Gastrocnemius medialis (tissue), 4 donors: ENCODE measurements at regions of chr5 and their contacts with region 1.

Region 1: DNA sequence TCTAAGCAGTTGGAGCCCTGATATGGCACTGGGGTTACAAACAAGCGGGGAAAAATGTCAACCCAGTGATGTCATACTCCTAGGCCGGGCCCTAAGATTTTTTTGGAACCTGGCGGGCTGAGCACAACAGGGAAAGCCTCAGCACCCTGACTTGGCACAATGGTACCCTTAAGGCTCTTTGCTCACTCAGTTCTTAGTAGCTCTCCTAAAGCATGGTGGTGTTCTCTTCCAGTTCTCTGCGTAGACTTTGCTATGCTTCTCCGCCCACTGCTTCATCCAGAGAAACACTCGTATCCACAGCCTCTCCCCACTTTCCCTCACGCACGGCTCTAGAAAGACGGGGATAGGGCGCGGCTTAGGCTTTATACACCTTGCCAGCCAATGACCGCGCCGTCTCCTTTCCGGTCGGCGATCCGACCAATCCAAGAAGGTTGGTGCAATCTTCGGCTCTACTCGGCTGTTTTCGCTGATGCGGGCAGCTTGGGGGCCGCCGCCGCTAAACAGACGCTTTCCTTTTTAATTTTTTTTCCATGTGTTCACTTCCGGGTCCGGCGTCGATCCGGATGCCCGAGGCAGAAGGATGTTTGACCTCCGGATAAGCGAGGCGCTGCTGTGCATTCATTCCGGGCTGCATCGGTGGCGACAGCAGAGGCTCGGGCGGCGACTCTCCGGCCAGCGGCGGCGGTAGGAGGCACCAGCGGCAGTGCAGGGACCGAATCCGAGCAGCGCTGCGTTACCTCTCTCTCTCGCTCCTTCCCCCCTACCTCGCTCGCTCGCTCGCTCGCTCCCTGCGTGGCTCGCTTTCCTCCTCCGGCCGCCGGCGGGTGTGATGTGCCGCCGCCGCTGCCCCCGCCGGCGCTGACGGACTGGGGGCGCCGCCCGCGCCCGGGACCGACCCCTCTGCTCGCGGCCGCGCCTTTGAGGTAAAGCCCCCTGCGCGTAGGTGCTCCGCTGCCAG is at the start of gene CSNK1G3:
- DNase-seq: peak; percentile 96 to 97
- ATAC-seq: peak; percentile 97
- H3K4me3 ChIP-seq: peak within 1 kb of the TSS; percentile 82 to 85 (median 84)
- H3K27ac ChIP-seq: peak within 1 kb of the TSS; percentile 83 to 89 (median 84)
- H3K4me1 ChIP-seq: peaks cover 20 to 28% of the 10 kb centered on the region in 2 donors
- H3K27me3 ChIP-seq: no peaks in the 10 kb centered on the region
- CTCF ChIP-seq: peak in 1 of 5 experiments; percentile 18
- POLR2A ChIP-seq: peak; percentile 78 to 92
- total RNA-seq, gene CSNK1G3: 14.6 to 23.2 (median 21.5) TPM

Region 2: GRCh38 chr5:121962347-121962670 is 1549.6 kb before region 1 on chr5:
- in situ Hi-C with region 1: no loop called
- intact Hi-C with region 1: loop called (anchors 5 kb)
- DNase-seq: no peak
- ATAC-seq: peak; percentile 6 to 9
- H3K4me3 ChIP-seq: peak overlapping the region; percentile 74 to 92 (median 87)
- H3K27ac ChIP-seq: peak overlapping the region; percentile 83 to 86 (median 85)
- H3K4me1 ChIP-seq: peaks cover 12 to 16% of the 10 kb centered on the region in 2 donors
- H3K27me3 ChIP-seq: peaks cover 0 to 10% (median 4%) of the 10 kb centered on the region in 3 donors
- CTCF ChIP-seq: no peak
- POLR2A ChIP-seq: no peak

Region 3: DNA sequence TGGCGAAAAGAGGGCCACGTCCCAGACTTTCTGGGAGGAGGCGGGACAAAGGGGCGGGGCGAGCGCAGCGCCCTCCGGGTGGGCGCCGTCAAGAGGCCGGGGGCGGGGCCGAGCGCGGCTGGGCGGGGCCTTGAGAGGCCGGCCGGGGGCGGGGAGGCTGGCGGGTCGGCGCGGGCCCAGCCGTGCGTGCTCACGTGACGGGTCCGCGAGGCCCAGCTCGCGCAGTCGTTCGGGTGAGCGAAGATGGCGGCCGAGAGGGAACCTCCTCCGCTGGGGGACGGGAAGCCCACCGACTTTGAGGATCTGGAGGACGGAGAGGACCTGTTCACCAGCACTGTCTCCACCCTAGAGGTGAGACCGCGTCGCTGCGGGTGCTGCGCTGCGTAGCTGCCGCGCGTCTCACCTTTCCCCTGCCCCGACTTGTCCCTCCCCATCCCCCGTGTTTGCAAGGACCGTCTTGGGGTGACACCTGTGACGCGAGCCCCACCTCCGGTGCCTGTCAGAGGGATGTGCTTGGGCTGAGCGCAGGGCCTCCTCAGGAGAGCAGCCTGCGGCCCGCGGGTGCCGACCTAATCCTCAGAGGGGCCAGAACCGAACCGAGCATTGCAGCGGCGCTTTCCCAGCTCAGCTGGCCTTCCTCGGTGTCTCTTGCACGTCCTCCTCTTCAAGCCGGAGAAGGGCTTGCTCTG is 736.9 kb before region 1 on chr5 and contains the start of gene SNX2:
- in situ Hi-C with region 1: no loop called
- intact Hi-C with region 1: loop called (anchors 5 kb)
- DNase-seq: peak; percentile 84 to 91
- ATAC-seq: peak; percentile 93 to 94
- H3K4me3 ChIP-seq: peak within 1 kb of the TSS; percentile 84 to 98 (median 89)
- H3K27ac ChIP-seq: peak within 1 kb of the TSS; percentile 83 to 95 (median 90)
- H3K4me1 ChIP-seq: peaks cover 21 to 30% of the 10 kb centered on the region in 2 donors
- H3K27me3 ChIP-seq: no peaks in the 10 kb centered on the region
- CTCF ChIP-seq: peak in 2 of 5 experiments; percentile 23 to 34
- POLR2A ChIP-seq: peak; percentile 80 to 84
- total RNA-seq, gene SNX2: 28.8 to 35.1 (median 32.0) TPM

Region 4: GRCh38 chr5:123036391-123037103 is 475.4 kb before region 1 on chr5 and contains the start of gene PPIC:
- in situ Hi-C with region 1: no loop called
- intact Hi-C with region 1: loop called (anchors 10 kb)
- DNase-seq: peak; percentile 70 to 81
- ATAC-seq: peak; percentile 89 to 93
- H3K4me3 ChIP-seq: peak within 1 kb of the TSS; percentile 85 to 96 (median 93)
- H3K27ac ChIP-seq: peak within 1 kb of the TSS; percentile 87 to 95 (median 92)
- H3K4me1 ChIP-seq: peaks cover 10 to 15% of the 10 kb centered on the region in 2 donors
- H3K27me3 ChIP-seq: no peaks in the 10 kb centered on the region
- CTCF ChIP-seq: no peak
- POLR2A ChIP-seq: peak; percentile 66 to 70
- total RNA-seq, gene PPIC: 10.3 to 29.8 (median 20.2) TPM

Region 5: GRCh38 chr5:123423278-123424149 is 88.4 kb before region 1 on chr5 and contains the start of gene CEP120:
- in situ Hi-C with region 1: loop called in 2 of 4 experiments (anchors 10 kb)
- intact Hi-C with region 1: loop called (anchors 2 kb)
- DNase-seq: peak; percentile 97 to 99
- ATAC-seq: peak; percentile 98 to 99
- H3K4me3 ChIP-seq: peak within 1 kb of the TSS; percentile 81 to 98 (median 89)
- H3K27ac ChIP-seq: peak within 1 kb of the TSS; percentile 86 to 91 (median 87)
- H3K4me1 ChIP-seq: peaks cover 9 to 11% of the 10 kb centered on the region in 2 donors
- H3K27me3 ChIP-seq: no peaks in the 10 kb centered on the region
- CTCF ChIP-seq: peak in 4 of 5 experiments; percentile 52 to 78 (median 70)
- POLR2A ChIP-seq: peak; percentile 48 to 67
- total RNA-seq, gene CEP120: 3.9 to 7.8 (median 7.6) TPM

Region 6: GRCh38 chr5:123598028-123598689 is 86.2 kb after region 1 on chr5:
- in situ Hi-C with region 1: no loop called
- intact Hi-C with region 1: loop called (anchors 5 kb)
- DNase-seq: no peak
- ATAC-seq: no peak
- H3K4me3 ChIP-seq: no peak overlapping the region
- H3K27ac ChIP-seq: no peak overlapping the region
- H3K4me1 ChIP-seq: no peaks in the 10 kb centered on the region
- H3K27me3 ChIP-seq: no peaks in the 10 kb centered on the region
- CTCF ChIP-seq: no peak
- POLR2A ChIP-seq: no peak

Region 7: DNA sequence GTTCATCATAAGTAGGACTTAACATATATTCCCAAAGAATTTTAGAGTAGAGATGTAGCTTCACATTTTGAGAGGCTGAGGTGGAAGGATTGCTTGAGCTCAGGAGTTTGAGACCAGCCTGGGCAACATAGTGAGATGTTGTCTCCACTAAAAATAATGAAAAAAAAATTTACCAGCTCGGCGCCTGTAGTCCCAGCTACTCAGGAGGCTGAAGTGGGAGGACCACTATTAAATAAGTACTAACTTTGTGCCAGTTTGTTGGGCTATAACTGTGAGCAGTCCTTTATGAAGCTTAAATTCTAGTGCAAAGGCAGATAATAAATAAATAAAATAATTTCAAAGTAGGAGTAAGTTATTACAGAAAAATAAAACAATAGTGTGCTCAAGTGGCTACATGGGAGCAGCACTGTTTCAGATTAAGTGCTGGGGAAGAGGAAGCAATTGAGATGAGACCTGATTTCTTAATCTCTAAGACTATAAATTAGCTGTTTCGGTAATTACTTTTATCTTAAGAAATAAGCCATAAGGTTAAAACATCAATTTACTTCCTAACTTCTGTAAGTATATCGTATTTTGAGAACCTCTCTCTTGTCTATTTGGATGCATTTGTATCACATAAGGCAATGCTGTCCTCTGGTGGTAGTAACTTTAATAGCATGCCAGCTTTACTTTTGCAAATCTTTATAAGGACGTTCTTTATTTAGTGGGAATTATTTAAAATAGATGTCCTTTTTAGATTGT is 98.9 kb after region 1 on chr5:
- in situ Hi-C with region 1: no loop called
- intact Hi-C with region 1: loop called (anchors 5 kb)
- DNase-seq: no peak
- ATAC-seq: peak in 1 of 2 donors; percentile 69
- H3K4me3 ChIP-seq: no peak overlapping the region
- H3K27ac ChIP-seq: no peak overlapping the region
- H3K4me1 ChIP-seq: no peaks in the 10 kb centered on the region
- H3K27me3 ChIP-seq: no peaks in the 10 kb centered on the region
- CTCF ChIP-seq: peak; percentile 72 to 99 (median 93)
- POLR2A ChIP-seq: no peak